Naive thymus-derived CD4-positive, alpha-beta T cell (primary cell): ENCODE measurements at regions of chr3 and their contacts with region 1.

Region 1: GRCh38 chr3:108662130-108662738 is 72.7 kb downstream of the DZIP3 start:
- DNase-seq: peak in 7 of 9 donors; percentile 53 to 79 (median 74)
- ATAC-seq: peak; percentile 95
- H3K4me3 ChIP-seq: no peak overlapping the region
- H3K4me3 Mint-ChIP-seq: peak overlapping the region in 6 of 10 donors; percentile 0 to 43 (median 15)
- H3K27ac ChIP-seq: no peak overlapping the region
- H3K27ac Mint-ChIP-seq: peak overlapping the region in 2 of 9 donors; percentile 6 to 22
- H3K4me1 ChIP-seq: no peaks in the 10 kb centered on the region
- H3K4me1 Mint-ChIP-seq: peaks cover 0 to 20% (median 17%) of the 10 kb centered on the region in 7 donors
- H3K27me3 ChIP-seq: no peaks in the 10 kb centered on the region
- H3K27me3 Mint-ChIP-seq: peaks cover 0 to 5% (median 0%) of the 10 kb centered on the region in 5 donors

Region 2: GRCh38 chr3:108489771-108490170 is 172.5 kb before region 1 on chr3:
- CTCF ChIA-PET with region 1: no interaction called
- POLR2A ChIA-PET with region 1: no interaction called
- intact Hi-C with region 1: loop called (anchors 1 to 2 kb)
- DNase-seq: peak in 7 of 9 donors; percentile 43 to 64 (median 54)
- ATAC-seq: peak; percentile 86
- H3K4me3 ChIP-seq: no peak overlapping the region
- H3K4me3 Mint-ChIP-seq: no peak overlapping the region
- H3K27ac ChIP-seq: no peak overlapping the region
- H3K27ac Mint-ChIP-seq: no peak overlapping the region
- H3K4me1 ChIP-seq: no peaks in the 10 kb centered on the region
- H3K4me1 Mint-ChIP-seq: peaks cover 0 to 3% (median 0%) of the 10 kb centered on the region in 7 donors
- H3K27me3 ChIP-seq: no peaks in the 10 kb centered on the region
- H3K27me3 Mint-ChIP-seq: peaks cover 0 to 13% (median 0%) of the 10 kb centered on the region in 5 donors

Region 3: GRCh38 chr3:108757404-108757982 is 95.3 kb after region 1 on chr3 and contains the start of gene RETNLB:
- CTCF ChIA-PET with region 1: no interaction called
- POLR2A ChIA-PET with region 1: no interaction called
- intact Hi-C with region 1: loop called in 1 of 2 experiments (anchors 5 kb)
- DNase-seq: no peak
- ATAC-seq: no peak
- H3K4me3 ChIP-seq: no peak within 1 kb of the TSS
- H3K4me3 Mint-ChIP-seq: peak within 1 kb of the TSS in 1 of 10 donors; percentile 4
- H3K27ac ChIP-seq: no peak within 1 kb of the TSS
- H3K27ac Mint-ChIP-seq: peak within 1 kb of the TSS in 2 of 9 donors; percentile 14 to 59
- H3K4me1 ChIP-seq: no peaks in the 10 kb centered on the region
- H3K4me1 Mint-ChIP-seq: peaks cover 0 to 21% (median 11%) of the 10 kb centered on the region in 7 donors
- H3K27me3 ChIP-seq: no peaks in the 10 kb centered on the region
- H3K27me3 Mint-ChIP-seq: no peaks in the 10 kb centered on the region
- total RNA-seq, gene RETNLB: not detected

Region 4: DNA sequence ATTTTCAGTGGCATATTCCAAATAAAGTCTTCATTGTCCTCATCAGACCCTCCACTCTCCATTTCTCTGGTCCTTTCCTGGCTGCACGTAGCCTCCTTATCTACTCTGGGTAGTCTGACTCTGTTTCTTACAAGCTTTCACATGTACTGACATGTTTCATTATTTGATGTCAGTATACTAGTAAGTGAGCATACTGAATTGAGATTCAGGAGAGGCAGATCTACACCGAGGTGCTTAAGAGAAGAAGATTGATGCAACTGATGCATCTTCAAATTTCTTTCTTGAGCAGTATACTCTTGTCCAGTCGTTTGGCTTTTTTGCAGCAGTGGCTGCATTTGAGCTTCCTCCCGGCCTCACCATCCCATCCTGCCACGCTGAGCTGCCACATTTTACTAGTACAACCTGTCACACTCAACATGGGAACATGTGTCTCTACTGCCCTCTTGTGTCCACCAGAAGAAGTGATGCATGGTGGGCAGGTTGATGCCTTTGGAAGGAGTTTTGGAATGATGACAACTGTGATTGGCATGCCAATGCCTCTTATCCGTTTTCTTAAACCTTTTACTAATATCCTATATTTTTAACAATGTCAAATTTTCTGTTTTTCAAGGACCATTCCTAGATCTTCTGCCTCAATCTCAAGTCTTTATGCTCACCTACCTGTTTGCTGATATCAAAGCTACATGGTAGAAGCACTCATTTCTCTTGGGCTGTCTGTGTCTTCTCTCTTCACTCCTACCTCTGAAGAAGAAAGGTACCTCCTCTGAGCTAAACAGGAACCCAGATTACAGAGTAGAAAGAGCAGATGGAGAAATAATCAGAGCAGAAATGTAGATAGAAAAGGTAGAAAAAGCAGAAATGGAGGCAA is 252.8 kb after region 1 on chr3:
- CTCF ChIA-PET with region 1: interaction called, 97 read pairs
- POLR2A ChIA-PET with region 1: interaction called, 3 read pairs
- intact Hi-C with region 1: loop called (anchors 1 kb)
- DNase-seq: peak; percentile 17 to 82 (median 71)
- ATAC-seq: peak; percentile 94
- H3K4me3 ChIP-seq: no peak overlapping the region
- H3K4me3 Mint-ChIP-seq: peak overlapping the region; percentile 43 to 72 (median 66)
- H3K27ac ChIP-seq: no peak overlapping the region
- H3K27ac Mint-ChIP-seq: peak overlapping the region in 6 of 9 donors; percentile 11 to 60 (median 32)
- H3K4me1 ChIP-seq: peaks cover 5 to 9% of the 10 kb centered on the region in 2 donors
- H3K4me1 Mint-ChIP-seq: peaks cover 12 to 21% (median 18%) of the 10 kb centered on the region in 7 donors
- H3K27me3 ChIP-seq: no peaks in the 10 kb centered on the region
- H3K27me3 Mint-ChIP-seq: peaks cover 0 to 33% (median 0%) of the 10 kb centered on the region in 5 donors

Region 5: DNA sequence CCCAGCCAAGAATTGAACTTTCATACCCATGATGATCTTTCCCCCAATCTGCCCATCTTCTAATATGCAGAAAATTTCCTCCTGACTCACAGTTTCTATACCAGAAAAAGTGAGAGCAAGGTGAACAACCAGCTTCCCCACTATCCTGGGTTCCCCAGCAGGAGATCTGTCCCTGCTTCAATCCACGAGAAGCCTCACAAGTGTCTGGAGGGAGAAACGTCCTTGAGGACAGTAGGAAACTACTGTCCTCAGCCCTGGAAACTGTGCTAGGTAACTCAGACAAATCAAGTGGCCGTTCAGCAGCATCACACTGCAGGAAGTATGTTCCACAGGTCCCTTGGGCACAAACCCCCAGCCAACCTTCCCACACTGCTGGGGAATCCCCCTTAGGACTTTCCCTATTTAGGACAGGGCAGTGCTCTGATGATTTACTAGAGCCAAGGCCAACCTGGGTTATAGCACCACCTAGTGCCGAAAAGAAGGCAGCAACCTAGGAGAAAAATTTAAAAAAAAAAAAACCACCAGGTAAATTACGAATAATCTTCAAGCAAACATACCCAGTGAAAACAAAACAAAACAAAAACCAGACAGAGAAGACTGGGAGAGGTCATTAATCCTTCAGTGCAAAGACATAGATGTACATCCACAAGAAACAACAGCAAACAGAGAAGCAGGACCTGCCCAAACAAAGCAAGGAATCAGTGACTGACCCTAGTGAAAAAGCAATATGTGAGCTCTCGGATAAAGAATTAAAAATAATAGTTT is 419.7 kb after region 1 on chr3:
- CTCF ChIA-PET with region 1: interaction called, 3 read pairs
- POLR2A ChIA-PET with region 1: no interaction called
- intact Hi-C with region 1: loop called (anchors 1 kb)
- DNase-seq: peak in 2 of 9 donors; percentile 14 to 30
- ATAC-seq: peak; percentile 84
- H3K4me3 ChIP-seq: no peak overlapping the region
- H3K4me3 Mint-ChIP-seq: no peak overlapping the region
- H3K27ac ChIP-seq: no peak overlapping the region
- H3K27ac Mint-ChIP-seq: peak overlapping the region in 1 of 9 donors; percentile 48
- H3K4me1 ChIP-seq: no peaks in the 10 kb centered on the region
- H3K4me1 Mint-ChIP-seq: peaks cover 0 to 3% (median 0%) of the 10 kb centered on the region in 7 donors
- H3K27me3 ChIP-seq: no peaks in the 10 kb centered on the region
- H3K27me3 Mint-ChIP-seq: peaks cover 25 to 54% (median 33%) of the 10 kb centered on the region in 5 donors